Naive thymus-derived CD4-positive, alpha-beta T cell (primary cell): ENCODE measurements at regions of chr1 and their contacts with region 1.

Region 1: GRCh38 chr1:9689011-9689706 is 37.6 kb downstream of the PIK3CD start:
- DNase-seq: peak; percentile 62 to 89 (median 82)
- ATAC-seq: peak; percentile 93
- H3K4me3 ChIP-seq: peak overlapping the region; percentile 50
- H3K4me3 Mint-ChIP-seq: peak overlapping the region; percentile 80 to 90 (median 87)
- H3K27ac ChIP-seq: peak overlapping the region; percentile 70
- H3K27ac Mint-ChIP-seq: peak overlapping the region in 8 of 9 donors; percentile 59 to 90 (median 78)
- H3K4me1 ChIP-seq: peaks cover 53 to 59% of the 10 kb centered on the region in 2 donors
- H3K4me1 Mint-ChIP-seq: peaks cover 36 to 85% (median 73%) of the 10 kb centered on the region in 7 donors
- H3K27me3 ChIP-seq: no peaks in the 10 kb centered on the region
- H3K27me3 Mint-ChIP-seq: no peaks in the 10 kb centered on the region

Region 2: GRCh38 chr1:9010781-9011323 is 678.3 kb before region 1 on chr1:
- CTCF ChIA-PET with region 1: no interaction called
- POLR2A ChIA-PET with region 1: no interaction called
- intact Hi-C with region 1: no loop called
- DNase-seq: no peak
- ATAC-seq: peak; percentile 63
- H3K4me3 ChIP-seq: no peak overlapping the region
- H3K4me3 Mint-ChIP-seq: no peak overlapping the region
- H3K27ac ChIP-seq: no peak overlapping the region
- H3K27ac Mint-ChIP-seq: no peak overlapping the region
- H3K4me1 ChIP-seq: no peaks in the 10 kb centered on the region
- H3K4me1 Mint-ChIP-seq: peaks cover 0 to 13% (median 8%) of the 10 kb centered on the region in 7 donors
- H3K27me3 ChIP-seq: no peaks in the 10 kb centered on the region
- H3K27me3 Mint-ChIP-seq: peaks cover 0 to 18% (median 0%) of the 10 kb centered on the region in 5 donors

Region 3: DNA sequence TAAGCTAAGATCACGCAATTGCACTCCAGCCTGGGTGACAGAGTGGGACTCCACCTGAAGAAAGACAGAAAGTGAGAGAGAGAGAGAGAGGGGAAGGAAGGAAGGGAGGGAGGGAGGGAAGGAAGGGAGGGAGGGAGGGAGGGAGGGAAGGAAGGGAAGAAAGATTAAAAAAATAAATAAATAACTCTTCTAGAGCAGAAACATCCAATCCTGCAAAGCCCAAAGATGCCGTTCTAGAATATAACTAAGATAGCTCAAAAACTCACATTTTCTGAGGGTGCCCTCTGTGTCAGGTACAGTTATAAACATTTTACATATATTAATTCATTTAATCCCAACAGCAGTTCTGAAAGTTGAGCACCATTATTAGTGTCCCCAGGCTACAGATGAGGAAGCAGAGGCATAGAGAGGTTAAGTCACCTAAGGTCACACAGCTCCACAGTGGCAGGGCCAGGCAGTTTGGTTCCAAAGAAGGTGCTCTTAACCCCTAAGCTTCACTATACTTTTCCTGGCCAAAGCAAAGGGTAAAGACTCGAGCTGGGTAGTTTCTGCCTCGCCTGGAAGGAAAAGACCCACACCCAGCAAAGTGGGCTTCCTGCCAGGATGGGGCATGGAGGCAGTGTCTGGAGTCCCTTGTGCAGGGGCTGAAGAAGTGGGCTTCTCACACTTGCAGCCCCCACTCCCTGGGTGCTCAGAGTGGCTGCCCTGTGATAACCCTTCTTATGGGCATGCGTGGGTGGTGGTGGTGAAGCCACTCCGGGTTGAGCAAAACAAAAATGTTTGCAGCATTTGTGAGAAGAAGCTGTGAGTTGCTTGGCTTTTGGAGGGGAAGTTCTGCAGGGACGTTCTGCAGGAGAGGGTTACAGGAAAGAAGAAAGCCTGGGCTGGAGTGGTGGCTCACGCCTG is 45.6 kb before region 1 on chr1:
- CTCF ChIA-PET with region 1: no interaction called
- POLR2A ChIA-PET with region 1: interaction called, 11 read pairs
- intact Hi-C with region 1: no loop called
- DNase-seq: peak in 3 of 9 donors; percentile 10 to 55 (median 33)
- ATAC-seq: peak; percentile 43
- H3K4me3 ChIP-seq: no peak overlapping the region
- H3K4me3 Mint-ChIP-seq: peak overlapping the region; percentile 56 to 86 (median 76)
- H3K27ac ChIP-seq: peak overlapping the region; percentile 55
- H3K27ac Mint-ChIP-seq: peak overlapping the region; percentile 80 to 94 (median 90)
- H3K4me1 ChIP-seq: peaks cover 18 to 66% of the 10 kb centered on the region in 2 donors
- H3K4me1 Mint-ChIP-seq: peaks cover 46 to 83% (median 76%) of the 10 kb centered on the region in 7 donors
- H3K27me3 ChIP-seq: no peaks in the 10 kb centered on the region
- H3K27me3 Mint-ChIP-seq: no peaks in the 10 kb centered on the region

Region 4: DNA sequence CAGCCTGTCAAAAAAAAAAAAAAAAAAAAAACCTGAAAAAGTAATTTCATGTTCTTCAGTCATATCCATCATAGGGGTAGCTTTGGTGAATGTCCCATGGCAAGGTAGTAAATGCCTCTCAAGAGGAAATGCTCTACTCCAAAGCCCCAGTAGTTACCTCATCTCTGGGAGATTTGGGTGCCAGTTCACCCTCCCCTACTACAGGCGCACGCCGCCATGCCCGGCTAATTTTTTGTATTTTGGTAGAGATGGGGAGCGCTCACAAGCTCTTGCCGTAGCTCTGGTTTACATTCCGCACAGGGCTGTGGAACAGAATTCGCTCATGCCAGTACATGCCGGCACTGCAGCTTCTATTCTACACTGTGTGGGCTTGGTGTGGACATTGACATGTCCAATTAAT is 24.0 kb before region 1 on chr1:
- CTCF ChIA-PET with region 1: no interaction called
- POLR2A ChIA-PET with region 1: interaction called, 15 read pairs
- intact Hi-C with region 1: loop called in 1 of 2 experiments (anchors 2 kb)
- DNase-seq: no peak
- ATAC-seq: no peak
- H3K4me3 ChIP-seq: no peak overlapping the region
- H3K4me3 Mint-ChIP-seq: peak overlapping the region in 9 of 10 donors; percentile 8 to 70 (median 46)
- H3K27ac ChIP-seq: peak overlapping the region; percentile 29
- H3K27ac Mint-ChIP-seq: peak overlapping the region in 8 of 9 donors; percentile 52 to 92 (median 68)
- H3K4me1 ChIP-seq: peaks cover 18 to 26% of the 10 kb centered on the region in 2 donors
- H3K4me1 Mint-ChIP-seq: peaks cover 29 to 65% (median 55%) of the 10 kb centered on the region in 7 donors
- H3K27me3 ChIP-seq: no peaks in the 10 kb centered on the region
- H3K27me3 Mint-ChIP-seq: no peaks in the 10 kb centered on the region

Region 5: DNA sequence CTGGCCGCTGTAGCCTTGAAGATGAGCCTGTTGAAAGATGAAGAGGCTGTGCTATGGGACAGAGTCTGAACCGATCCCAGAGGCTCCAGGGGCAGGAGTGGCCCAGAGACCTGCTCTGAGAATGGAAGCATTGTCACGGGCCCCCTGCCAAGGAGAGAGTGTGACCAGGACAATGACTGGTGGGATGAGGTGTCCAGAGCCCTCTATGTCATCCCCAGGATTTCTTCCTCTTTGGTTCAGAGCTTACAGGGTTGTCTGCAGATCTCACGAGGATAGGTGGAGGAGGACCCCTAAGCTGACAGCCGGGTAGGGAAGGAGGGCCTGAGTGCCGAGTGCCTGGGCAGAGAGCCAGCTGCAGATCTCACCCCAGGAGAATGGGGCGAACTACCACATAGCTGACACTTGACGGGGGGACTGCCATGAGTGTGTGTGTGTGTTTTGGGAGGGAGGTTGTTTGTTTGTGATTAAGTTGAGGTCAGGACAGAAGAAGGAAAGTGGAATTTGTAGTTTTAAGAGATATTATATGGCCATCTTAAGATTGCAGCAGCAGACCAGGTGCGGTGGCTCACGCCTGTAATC is 12.3 kb before region 1 on chr1:
- CTCF ChIA-PET with region 1: interaction called, 4 read pairs
- POLR2A ChIA-PET with region 1: interaction called, 4 read pairs
- intact Hi-C with region 1: loop called in 1 of 2 experiments (anchors 1 kb)
- DNase-seq: no peak
- ATAC-seq: no peak
- H3K4me3 ChIP-seq: no peak overlapping the region
- H3K4me3 Mint-ChIP-seq: peak overlapping the region; percentile 11 to 71 (median 36)
- H3K27ac ChIP-seq: peak overlapping the region; percentile 60
- H3K27ac Mint-ChIP-seq: peak overlapping the region in 8 of 9 donors; percentile 44 to 92 (median 88)
- H3K4me1 ChIP-seq: peaks cover 40 to 46% of the 10 kb centered on the region in 2 donors
- H3K4me1 Mint-ChIP-seq: peaks cover 52 to 90% (median 71%) of the 10 kb centered on the region in 7 donors
- H3K27me3 ChIP-seq: no peaks in the 10 kb centered on the region
- H3K27me3 Mint-ChIP-seq: no peaks in the 10 kb centered on the region

Region 6: GRCh38 chr1:9699361-9699760 is 10.2 kb after region 1 on chr1:
- CTCF ChIA-PET with region 1: interaction called, 5 read pairs
- POLR2A ChIA-PET with region 1: interaction called, 20 read pairs
- intact Hi-C with region 1: loop called in 1 of 2 experiments (anchors 1 kb)
- DNase-seq: no peak
- ATAC-seq: no peak
- H3K4me3 ChIP-seq: no peak overlapping the region
- H3K4me3 Mint-ChIP-seq: peak overlapping the region in 4 of 10 donors; percentile 3 to 60 (median 23)
- H3K27ac ChIP-seq: no peak overlapping the region
- H3K27ac Mint-ChIP-seq: peak overlapping the region in 8 of 9 donors; percentile 21 to 86 (median 64)
- H3K4me1 ChIP-seq: peaks cover 19 to 36% of the 10 kb centered on the region in 2 donors
- H3K4me1 Mint-ChIP-seq: peaks cover 38 to 80% (median 65%) of the 10 kb centered on the region in 7 donors
- H3K27me3 ChIP-seq: no peaks in the 10 kb centered on the region
- H3K27me3 Mint-ChIP-seq: no peaks in the 10 kb centered on the region

Region 7: DNA sequence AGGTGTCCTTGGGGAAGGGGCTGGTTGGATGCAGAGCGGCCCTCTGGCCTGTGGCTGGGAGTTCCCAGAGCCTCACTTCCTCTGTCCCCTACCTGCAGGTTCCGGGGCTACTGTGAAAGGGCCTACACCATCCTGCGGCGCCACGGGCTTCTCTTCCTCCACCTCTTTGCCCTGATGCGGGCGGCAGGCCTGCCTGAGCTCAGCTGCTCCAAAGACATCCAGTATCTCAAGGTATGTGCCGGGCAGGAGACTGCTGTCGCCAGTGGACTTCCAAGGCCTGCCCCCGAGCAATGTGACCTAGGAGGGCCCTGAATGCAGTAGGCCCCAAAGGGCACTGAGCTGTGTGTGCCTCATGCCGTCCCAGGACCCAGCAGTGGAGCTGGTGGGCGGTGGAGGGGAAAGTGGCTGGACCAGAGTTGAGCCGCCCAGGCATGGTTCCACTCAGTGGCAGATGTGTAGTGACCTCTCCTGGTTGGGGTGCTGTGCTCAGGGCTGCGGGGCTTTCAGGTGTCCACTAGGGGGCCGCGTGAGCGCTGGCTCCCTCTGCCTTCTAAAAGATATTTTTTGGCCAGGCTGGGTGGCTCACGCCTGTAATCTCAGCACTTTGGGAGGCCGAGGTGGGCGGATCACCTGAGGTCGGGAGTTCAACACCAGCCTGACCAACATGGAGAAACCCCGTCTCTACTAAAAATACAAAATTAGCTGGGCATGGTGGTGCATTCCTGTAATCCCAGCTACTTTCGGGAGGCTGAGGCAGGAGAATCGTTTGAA is 35.7 kb after region 1 on chr1:
- CTCF ChIA-PET with region 1: interaction called, 4 read pairs
- POLR2A ChIA-PET with region 1: interaction called, 13 read pairs
- intact Hi-C with region 1: loop called (anchors 2 to 5 kb)
- DNase-seq: peak; percentile 58 to 72 (median 64)
- ATAC-seq: peak; percentile 65
- H3K4me3 ChIP-seq: no peak overlapping the region
- H3K4me3 Mint-ChIP-seq: peak overlapping the region in 8 of 10 donors; percentile 14 to 68 (median 62)
- H3K27ac ChIP-seq: peak overlapping the region; percentile 51
- H3K27ac Mint-ChIP-seq: peak overlapping the region; percentile 73 to 88 (median 80)
- H3K4me1 ChIP-seq: peaks cover 36 to 83% of the 10 kb centered on the region in 2 donors
- H3K4me1 Mint-ChIP-seq: peaks cover 38 to 84% (median 60%) of the 10 kb centered on the region in 7 donors
- H3K27me3 ChIP-seq: no peaks in the 10 kb centered on the region
- H3K27me3 Mint-ChIP-seq: no peaks in the 10 kb centered on the region

Region 8: GRCh38 chr1:10888286-10888685 is 1199.1 kb after region 1 on chr1:
- CTCF ChIA-PET with region 1: no interaction called
- POLR2A ChIA-PET with region 1: no interaction called
- intact Hi-C with region 1: no loop called
- DNase-seq: no peak
- ATAC-seq: no peak
- H3K4me3 ChIP-seq: no peak overlapping the region
- H3K4me3 Mint-ChIP-seq: peak overlapping the region in 1 of 10 donors; percentile 26
- H3K27ac ChIP-seq: no peak overlapping the region
- H3K27ac Mint-ChIP-seq: no peak overlapping the region
- H3K4me1 ChIP-seq: no peaks in the 10 kb centered on the region
- H3K4me1 Mint-ChIP-seq: peaks cover 0 to 14% (median 8%) of the 10 kb centered on the region in 7 donors
- H3K27me3 ChIP-seq: peaks cover 0 to 4% of the 10 kb centered on the region in 2 donors
- H3K27me3 Mint-ChIP-seq: peaks cover 41 to 63% (median 45%) of the 10 kb centered on the region in 5 donors